ENCODE measurements at regions of chr1 and their contacts with region 1.

Region 1: GRCh38 chr1:222455188-222455879 is 92.6 kb downstream of the HHIPL2 start:
- DNase-seq: peak; percentile 83
- ATAC-seq: peak; percentile 96
- H3K4me3 Mint-ChIP-seq: no peak overlapping the region
- H3K27ac Mint-ChIP-seq: no peak overlapping the region
- H3K4me1 Mint-ChIP-seq: peaks cover 2% of the 10 kb centered on the region
- H3K27me3 Mint-ChIP-seq: peaks cover under 1% of the 10 kb centered on the region

Region 2: DNA sequence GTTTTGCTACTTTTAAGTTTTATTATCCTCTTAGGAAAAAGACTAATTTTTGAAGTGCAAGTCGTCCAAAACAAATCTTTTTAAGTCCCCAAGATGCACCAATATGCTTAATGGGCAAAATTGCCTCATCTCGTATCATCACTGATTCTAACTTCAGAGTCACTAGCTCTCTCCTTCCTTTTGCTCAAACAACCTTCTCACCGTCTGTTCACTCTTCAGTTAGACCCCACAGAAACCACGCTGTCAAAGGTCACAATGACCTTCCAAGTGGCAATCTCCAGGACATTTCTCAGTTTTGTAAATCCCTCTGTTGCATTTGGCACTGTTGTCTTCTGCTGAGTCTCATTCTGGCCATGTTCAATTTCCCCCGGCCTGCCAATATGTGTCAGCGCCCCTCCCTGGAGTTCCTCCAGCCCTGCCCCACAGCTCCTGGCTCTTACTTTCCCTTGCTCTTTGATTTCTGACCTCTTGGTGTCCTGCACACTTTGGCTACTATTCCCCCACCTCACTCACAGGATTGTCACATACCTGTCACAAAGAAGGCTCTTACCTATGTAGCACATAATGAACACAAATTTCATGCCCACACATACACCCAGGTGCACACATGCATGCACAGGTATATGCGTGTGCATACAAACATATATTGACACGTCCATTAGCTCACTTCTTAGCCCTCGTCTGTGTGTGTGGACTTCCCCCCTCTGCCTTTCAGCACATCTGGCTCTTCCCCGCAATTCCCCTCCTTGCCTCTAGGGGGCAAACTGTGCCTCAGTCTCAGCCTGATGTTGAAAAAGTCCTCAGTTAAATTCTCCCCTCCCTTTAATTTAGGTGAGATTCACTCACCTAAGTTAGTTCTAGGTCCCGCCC is 359.5 kb before region 1 on chr1:
- CTCF ChIA-PET with region 1: interaction called, 15 read pairs
- DNase-seq: peak; percentile 63
- ATAC-seq: peak; percentile 75
- H3K4me3 Mint-ChIP-seq: no peak overlapping the region
- H3K27ac Mint-ChIP-seq: no peak overlapping the region
- H3K4me1 Mint-ChIP-seq: no peaks in the 10 kb centered on the region
- H3K27me3 Mint-ChIP-seq: peaks cover 3% of the 10 kb centered on the region

Region 3: GRCh38 chr1:222443566-222443965 is 11.8 kb before region 1 on chr1:
- CTCF ChIA-PET with region 1: interaction called, 12 read pairs
- DNase-seq: no peak
- ATAC-seq: no peak
- H3K4me3 Mint-ChIP-seq: no peak overlapping the region
- H3K27ac Mint-ChIP-seq: no peak overlapping the region
- H3K4me1 Mint-ChIP-seq: no peaks in the 10 kb centered on the region
- H3K27me3 Mint-ChIP-seq: no peaks in the 10 kb centered on the region